Cardiac septum (tissue), 1 donor: ENCODE measurements at regions of chr19 and their contacts with region 1.

Region 1: DNA sequence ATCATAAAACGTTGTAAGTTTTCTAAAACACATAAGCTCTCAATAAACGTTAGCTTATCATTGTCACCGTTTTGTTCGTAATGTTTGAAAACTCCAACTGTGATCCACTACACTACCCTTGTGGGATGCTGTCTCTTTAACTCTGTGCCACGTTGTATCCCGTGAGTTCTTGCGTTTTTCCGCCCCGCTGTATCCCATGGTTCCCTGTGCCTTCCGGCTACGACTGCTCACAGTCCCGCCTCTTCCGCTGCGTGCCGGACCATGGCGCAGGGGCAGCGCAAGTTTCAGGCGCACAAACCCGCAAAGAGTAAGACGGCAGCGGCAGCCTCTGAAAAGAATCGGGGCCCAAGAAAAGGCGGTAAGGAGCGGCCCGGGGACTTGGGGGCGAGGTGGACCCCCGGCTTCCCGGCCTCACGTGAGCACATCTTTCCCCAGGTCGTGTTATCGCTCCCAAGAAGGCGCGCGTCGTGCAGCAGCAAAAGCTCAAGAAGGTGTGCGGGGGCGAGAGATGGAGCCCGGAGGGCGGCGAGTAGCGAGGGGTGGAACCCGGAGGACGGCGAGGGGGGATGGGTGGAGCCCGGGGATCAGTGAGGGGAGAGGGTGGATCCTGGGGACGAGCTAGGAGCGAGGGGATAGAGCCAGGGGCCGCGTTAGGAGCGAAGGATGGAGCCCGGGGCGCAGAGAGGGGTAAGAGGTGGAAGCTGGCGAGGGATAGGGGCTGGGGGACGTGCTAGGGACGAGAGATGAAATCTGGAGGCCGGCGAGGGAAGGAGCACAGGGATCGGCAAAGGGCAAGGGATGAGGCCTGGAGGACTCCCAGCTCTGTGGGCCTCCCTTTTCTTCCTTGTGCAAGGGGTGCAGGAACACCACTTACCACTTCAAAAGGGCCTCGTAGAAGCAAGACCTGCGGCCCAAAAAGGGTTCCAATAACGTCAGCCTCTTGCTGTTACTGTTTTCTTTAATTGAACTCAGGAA is at the start of gene C19orf53:
- DNase-seq: peak; percentile 96
- total RNA-seq, gene C19orf53: 91.2 TPM

Region 2: DNA sequence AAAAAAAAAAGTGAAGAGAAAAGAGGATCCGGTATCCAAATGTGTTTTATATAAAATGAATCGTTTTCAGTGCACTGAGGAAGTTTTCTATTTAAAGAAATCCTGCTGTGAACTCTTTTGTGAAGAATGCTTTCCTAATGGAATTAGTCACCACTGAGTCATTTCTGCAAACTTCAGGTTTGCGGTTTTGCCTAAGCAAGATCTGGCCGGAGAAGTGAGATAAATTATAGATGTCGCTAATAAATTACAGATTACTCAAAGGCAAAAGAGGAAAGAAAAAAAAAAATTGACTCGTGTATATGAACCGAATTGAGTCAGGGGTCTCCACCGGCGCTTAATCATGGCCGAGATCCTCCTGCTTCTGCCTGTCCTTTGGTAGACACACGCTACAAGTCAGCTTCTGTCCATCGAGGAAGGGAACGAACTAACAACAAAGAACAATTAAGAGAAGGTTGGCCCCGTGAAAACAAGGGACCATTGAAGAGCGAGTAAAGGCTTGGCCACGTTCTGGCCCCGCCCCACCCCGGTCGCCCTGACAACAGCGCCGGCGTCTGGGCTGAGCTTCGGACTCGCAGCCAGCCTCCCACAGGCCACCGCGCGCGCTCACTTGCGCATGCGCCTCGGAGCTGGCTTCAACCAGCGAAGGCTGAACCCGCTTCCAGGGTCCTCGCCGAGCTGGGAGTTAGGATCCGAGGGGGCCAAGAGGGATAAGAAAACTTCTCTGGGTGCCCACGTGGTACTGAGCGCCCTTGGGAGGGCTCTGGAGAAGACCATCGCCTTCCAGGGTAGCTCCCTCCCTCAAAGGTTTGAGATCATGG is 43.1 kb before region 1 on chr19:
- intact Hi-C with region 1: loop called (anchors 5 kb)
- DNase-seq: peak; percentile 98

Region 3: GRCh38 chr19:13742756-13743155 is 31.7 kb before region 1 on chr19:
- intact Hi-C with region 1: no loop called
- DNase-seq: no peak

Region 4: DNA sequence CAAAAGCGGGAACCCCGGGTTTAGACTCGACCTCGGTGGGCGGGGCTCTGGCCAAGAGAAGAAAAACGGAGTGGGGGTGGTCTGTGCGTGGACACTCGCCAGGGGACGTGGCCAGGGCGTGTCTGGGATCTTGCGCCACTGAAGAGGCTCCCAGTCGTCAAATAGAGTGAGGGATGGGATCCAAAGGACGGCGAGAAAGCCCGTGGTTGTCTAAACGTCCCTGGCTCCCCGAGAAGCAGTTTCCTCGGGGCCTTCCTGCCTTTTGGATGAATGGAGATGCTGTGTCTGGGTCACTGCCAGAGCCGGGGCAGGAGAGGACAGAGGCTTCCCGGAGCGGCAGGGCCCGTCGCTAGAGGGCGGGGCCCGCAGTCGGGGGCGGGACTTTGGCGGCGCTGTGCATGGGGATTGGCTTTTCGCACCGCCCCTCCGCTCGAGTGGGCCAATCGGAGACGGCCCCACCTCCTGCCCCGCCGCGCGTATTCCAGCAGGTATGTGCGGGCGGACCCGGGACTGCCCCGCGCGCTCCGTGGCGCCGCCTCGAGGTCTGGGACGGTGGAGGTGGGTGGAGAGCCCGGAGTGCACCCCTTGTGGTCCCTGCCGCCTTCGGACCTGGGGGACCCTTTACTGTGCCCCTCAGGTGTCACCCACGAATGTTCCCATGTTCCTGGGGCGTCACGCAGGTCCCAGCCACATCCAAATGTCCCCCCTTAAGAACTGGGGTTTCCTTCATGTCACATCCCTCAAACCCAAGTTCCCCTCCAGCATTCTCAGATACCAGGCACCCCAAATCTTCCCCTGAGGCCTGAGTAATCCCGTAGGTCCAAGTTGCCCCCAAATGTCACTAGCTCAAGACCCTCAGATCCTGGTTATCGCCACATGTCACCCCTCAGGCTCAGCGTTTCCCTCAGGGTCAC is 59.1 kb after region 1 on chr19:
- intact Hi-C with region 1: no loop called
- DNase-seq: peak; percentile 97